Activated CD4-positive, alpha-beta T cell treated with anti-CD3 and anti-CD28 coated beads for 36 hours (primary cell): ENCODE measurements at regions of chr3 and their contacts with region 1.

Region 1: DNA sequence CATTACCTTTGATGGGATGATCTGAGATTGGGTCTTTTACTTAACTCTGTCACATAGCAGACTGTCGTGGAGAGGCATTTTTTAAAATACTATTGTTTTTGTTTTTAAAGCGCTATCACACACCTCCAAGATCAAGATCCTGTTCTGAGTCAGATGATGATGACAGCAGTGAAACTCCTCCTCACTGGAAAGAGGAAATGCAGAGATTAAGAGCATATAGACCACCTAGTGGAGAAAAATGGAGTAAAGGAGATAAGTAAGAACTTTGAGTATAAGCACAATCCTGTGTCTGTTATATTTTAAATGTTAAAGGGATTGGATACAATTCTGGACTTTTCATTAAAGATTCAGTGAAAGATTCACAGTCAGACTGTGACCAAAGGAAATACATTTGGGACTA is 18.4 kb upstream of the ZBTB47 start:
- DNase-seq: peak; percentile 7
- ATAC-seq: peak; percentile 52
- H3K4me3 Mint-ChIP-seq: no peak overlapping the region
- H3K27ac Mint-ChIP-seq: peak overlapping the region; percentile 56
- H3K4me1 Mint-ChIP-seq: peaks cover 13% of the 10 kb centered on the region
- H3K27me3 Mint-ChIP-seq: no peaks in the 10 kb centered on the region

Region 2: GRCh38 chr3:41117398-41117870 is 1517.7 kb before region 1 on chr3:
- CTCF ChIA-PET with region 1: no interaction called
- POLR2A ChIA-PET with region 1: no interaction called
- intact Hi-C with region 1: loop called in 1 of 2 experiments (anchors 2 kb)
- DNase-seq: peak; percentile 94
- ATAC-seq: peak; percentile 96
- H3K4me3 Mint-ChIP-seq: peak overlapping the region; percentile 2
- H3K27ac Mint-ChIP-seq: peak overlapping the region; percentile 86
- H3K4me1 Mint-ChIP-seq: peaks cover 28% of the 10 kb centered on the region
- H3K27me3 Mint-ChIP-seq: no peaks in the 10 kb centered on the region

Region 3: GRCh38 chr3:42556089-42556632 is 79.0 kb before region 1 on chr3:
- CTCF ChIA-PET with region 1: no interaction called
- POLR2A ChIA-PET with region 1: no interaction called
- intact Hi-C with region 1: loop called in 1 of 2 experiments (anchors 1 kb)
- DNase-seq: peak; percentile 45
- ATAC-seq: peak; percentile 98
- H3K4me3 Mint-ChIP-seq: peak overlapping the region; percentile 22
- H3K27ac Mint-ChIP-seq: peak overlapping the region; percentile 86
- H3K4me1 Mint-ChIP-seq: peaks cover 32% of the 10 kb centered on the region
- H3K27me3 Mint-ChIP-seq: no peaks in the 10 kb centered on the region

Region 4: GRCh38 chr3:42590989-42591756 is 43.9 kb before region 1 on chr3:
- CTCF ChIA-PET with region 1: no interaction called
- POLR2A ChIA-PET with region 1: no interaction called
- intact Hi-C with region 1: loop called in 1 of 2 experiments (anchors 1 kb)
- DNase-seq: peak; percentile 29
- ATAC-seq: no peak
- H3K4me3 Mint-ChIP-seq: peak overlapping the region; percentile 90
- H3K27ac Mint-ChIP-seq: peak overlapping the region; percentile 95
- H3K4me1 Mint-ChIP-seq: peaks cover 34% of the 10 kb centered on the region
- H3K27me3 Mint-ChIP-seq: no peaks in the 10 kb centered on the region

Region 5: GRCh38 chr3:42613462-42613861 is 21.6 kb before region 1 on chr3:
- CTCF ChIA-PET with region 1: interaction called, 10 read pairs
- POLR2A ChIA-PET with region 1: no interaction called
- intact Hi-C with region 1: no loop called
- DNase-seq: no peak
- ATAC-seq: peak; percentile 49
- H3K4me3 Mint-ChIP-seq: no peak overlapping the region
- H3K27ac Mint-ChIP-seq: peak overlapping the region; percentile 1
- H3K4me1 Mint-ChIP-seq: peaks cover 63% of the 10 kb centered on the region
- H3K27me3 Mint-ChIP-seq: no peaks in the 10 kb centered on the region

Region 6: GRCh38 chr3:42804106-42804830 is 169.2 kb after region 1 on chr3 and contains the start of gene HIGD1A:
- CTCF ChIA-PET with region 1: no interaction called
- POLR2A ChIA-PET with region 1: no interaction called
- intact Hi-C with region 1: loop called in 1 of 2 experiments (anchors 1 kb)
- DNase-seq: peak; percentile 97
- ATAC-seq: peak; percentile 99
- H3K4me3 Mint-ChIP-seq: peak within 1 kb of the TSS; percentile 91
- H3K27ac Mint-ChIP-seq: peak within 1 kb of the TSS; percentile 86
- H3K4me1 Mint-ChIP-seq: peaks cover 41% of the 10 kb centered on the region
- H3K27me3 Mint-ChIP-seq: peaks cover 6% of the 10 kb centered on the region
- total RNA-seq, gene HIGD1A: 74.9 to 77.8 TPM

Region 7: DNA sequence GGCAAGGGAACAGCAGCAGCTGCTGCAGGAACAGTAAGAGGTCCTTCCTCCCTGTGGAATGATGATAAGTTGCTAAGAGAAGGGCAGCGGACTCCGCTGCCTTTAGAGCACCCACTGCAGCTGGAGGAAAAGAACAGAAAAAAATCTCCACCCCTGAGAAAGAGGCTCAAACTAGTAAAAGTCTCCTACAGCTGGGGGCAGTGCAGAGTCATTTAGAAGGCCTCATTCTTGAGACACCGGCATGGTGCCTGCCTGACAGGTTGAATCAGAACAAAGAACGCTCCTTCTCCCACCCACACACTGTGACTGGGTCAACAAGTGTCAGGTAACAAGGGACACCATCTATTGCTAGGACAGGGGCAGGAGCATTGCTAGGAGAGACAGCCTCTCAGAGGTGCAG is 1244.1 kb after region 1 on chr3:
- CTCF ChIA-PET with region 1: no interaction called
- POLR2A ChIA-PET with region 1: no interaction called
- intact Hi-C with region 1: no loop called
- DNase-seq: peak; percentile 31
- ATAC-seq: peak; percentile 36
- H3K4me3 Mint-ChIP-seq: no peak overlapping the region
- H3K27ac Mint-ChIP-seq: no peak overlapping the region
- H3K4me1 Mint-ChIP-seq: no peaks in the 10 kb centered on the region
- H3K27me3 Mint-ChIP-seq: peaks cover 7% of the 10 kb centered on the region